PC-9 (cell line): ENCODE measurements at regions of chr14 and their contacts with region 1.

Region 1: GRCh38 chr14:54488646-54489317 is at the start of gene GMFB:
- DNase-seq: peak; percentile 85 to 94
- H3K4me3 ChIP-seq: peak within 1 kb of the TSS; percentile 80
- H3K27ac ChIP-seq: peak within 1 kb of the TSS; percentile 95
- H3K4me1 ChIP-seq: peaks cover 30% of the 10 kb centered on the region
- H3K27me3 ChIP-seq: no peaks in the 10 kb centered on the region
- CTCF ChIP-seq: no peak
- total RNA-seq, gene GMFB: 32.2 and 35.5 TPM in 2 replicates

Region 2: DNA sequence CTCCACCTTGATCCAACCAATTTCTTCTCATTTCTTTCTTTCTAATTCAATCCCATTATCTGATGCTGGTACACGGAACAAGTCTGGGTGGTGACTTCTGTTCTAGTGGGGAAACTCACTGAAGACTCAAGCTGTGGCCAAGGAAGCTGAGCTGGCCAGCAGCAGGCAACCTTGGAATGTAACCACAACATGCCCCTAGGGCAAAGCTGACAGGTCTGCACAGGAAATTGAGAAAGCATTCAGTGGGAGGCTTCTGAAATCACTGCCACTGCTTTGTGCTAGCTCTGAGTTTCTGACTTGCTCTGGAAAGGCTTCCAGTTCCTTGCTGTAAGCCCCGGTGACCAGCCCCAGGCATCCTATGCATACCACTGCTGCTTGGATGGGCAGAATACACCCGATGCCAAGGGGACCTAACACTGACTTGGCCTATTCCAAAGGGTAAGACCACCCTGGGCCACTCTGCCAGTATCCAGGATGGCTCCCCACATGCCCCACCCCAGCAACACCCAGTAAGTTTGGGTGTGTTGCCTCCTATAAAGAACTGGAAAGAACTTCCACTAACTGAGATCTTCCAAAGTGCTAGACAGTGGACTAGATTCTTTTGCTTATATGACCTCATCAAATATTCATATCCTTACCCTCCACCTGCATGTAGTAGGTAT is 176.5 kb before region 1 on chr14:
- CTCF ChIA-PET with region 1: no interaction called
- POLR2A ChIA-PET with region 1: no interaction called
- intact Hi-C with region 1: no loop called
- DNase-seq: peak; percentile 91 to 97
- H3K4me3 ChIP-seq: no peak overlapping the region; the same call in 1 of the 2 replicates
- H3K27ac ChIP-seq: peak overlapping the region; percentile 75
- H3K4me1 ChIP-seq: peaks cover 35% of the 10 kb centered on the region
- H3K27me3 ChIP-seq: no peaks in the 10 kb centered on the region
- CTCF ChIP-seq: no peak

Region 3: DNA sequence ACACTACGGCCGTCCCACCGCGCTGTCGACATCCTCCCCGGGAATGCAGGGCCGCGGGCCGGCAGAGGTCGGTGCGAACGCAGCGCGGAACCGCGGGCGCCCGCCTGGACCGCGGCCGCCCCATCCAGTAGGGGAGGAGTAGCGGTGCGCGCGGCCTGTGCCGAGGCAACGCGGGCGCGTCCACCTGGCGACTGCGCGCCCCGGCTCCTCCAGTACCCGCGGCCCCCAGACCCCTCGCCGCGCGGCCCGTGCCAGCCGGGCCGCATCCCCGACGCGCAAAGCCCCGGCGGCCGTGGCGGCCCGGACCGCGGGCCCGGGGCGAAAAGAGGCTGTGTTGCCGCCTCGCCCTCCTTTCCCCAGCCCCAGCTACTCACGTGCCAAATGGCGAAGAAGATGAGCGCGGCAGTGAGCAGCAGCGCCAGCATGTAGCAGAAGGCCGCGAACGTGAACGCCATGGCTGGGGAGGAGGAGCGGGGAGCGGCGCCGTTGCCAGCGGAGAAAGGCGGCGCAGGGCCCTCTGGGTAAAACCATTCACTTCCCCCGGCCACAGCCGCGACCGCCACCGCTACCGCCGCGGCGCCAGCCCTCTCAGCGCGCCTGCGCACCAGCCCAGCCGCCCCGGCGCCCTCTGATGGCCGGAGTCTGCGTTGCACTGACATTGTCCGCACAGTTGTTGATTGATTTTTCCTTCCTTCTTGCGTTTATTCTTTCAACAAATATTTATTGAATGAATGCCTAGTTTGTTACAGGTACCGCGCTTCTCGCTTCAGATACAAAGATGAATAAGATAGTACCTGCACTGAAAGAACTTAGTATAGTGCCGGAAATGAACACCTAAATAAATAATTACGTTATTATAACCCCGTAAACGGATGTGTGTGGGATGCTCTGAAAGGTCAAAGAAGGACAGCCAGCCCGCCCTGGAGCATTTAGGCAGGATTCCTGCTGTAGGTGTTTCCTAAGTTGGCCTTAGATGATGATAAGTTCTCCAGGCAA is 47.6 kb before region 1 on chr14 and contains the start of gene CNIH1:
- CTCF ChIA-PET with region 1: no interaction called
- POLR2A ChIA-PET with region 1: interaction called, 3 read pairs
- intact Hi-C with region 1: loop called (anchors 2 kb)
- DNase-seq: peak; percentile 74 to 93
- H3K4me3 ChIP-seq: peak within 1 kb of the TSS; percentile 72
- H3K27ac ChIP-seq: peak within 1 kb of the TSS; percentile 73
- H3K4me1 ChIP-seq: peaks cover 37% of the 10 kb centered on the region
- H3K27me3 ChIP-seq: no peaks in the 10 kb centered on the region
- CTCF ChIP-seq: peak; percentile 88
- total RNA-seq, gene CNIH1: 70.6 and 114 TPM in 2 replicates

Region 4: DNA sequence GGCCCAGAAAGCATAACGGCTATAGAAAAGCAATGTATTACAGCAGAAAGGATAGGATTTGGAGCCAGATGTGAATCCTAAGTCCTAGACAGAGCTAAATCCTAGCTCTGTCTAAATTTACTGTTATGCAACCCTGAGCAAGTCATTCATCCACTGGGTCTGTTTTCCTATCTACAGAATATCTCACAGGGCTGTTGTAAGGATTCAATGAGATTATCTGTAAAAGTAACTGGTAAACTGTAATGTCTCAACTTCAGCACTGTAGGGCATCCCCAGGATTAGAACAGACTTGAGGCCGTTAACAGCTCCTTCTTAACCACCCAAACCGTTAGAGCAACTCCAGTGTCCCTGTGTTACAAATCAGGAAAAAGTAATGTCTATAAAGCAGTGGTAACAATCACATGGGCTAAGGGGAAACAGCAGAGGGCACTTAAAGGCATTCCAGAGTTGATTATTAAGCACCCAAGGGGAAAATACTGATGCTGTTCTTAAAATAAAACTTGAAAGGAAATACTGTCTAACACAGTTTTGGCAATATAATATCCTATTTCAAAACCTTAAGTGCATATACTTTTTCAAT is 10.1 kb before region 1 on chr14:
- CTCF ChIA-PET with region 1: no interaction called
- POLR2A ChIA-PET with region 1: interaction called, 10 read pairs
- intact Hi-C with region 1: no loop called
- DNase-seq: no peak
- H3K4me3 ChIP-seq: no peak overlapping the region
- H3K27ac ChIP-seq: no peak overlapping the region
- H3K4me1 ChIP-seq: peaks cover 39% of the 10 kb centered on the region
- H3K27me3 ChIP-seq: no peaks in the 10 kb centered on the region
- CTCF ChIP-seq: no peak

Region 5: DNA sequence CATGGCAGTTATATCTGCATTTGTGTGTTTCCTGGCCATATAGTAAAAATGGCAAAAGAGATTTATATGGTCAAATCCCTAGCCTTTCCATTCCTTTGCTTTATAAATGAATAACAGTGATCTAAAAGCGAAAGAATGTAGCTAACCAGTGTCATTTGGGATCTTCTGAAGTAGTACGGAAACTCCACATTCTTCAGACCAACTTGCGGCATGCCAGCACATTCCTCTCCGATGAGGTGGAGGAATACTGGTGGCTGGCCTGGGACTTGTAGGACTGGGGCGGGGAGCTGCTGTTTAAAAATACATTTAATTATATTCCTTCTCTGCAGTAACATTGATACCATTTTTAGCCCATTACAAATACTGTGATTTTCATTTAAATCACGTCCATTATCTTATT is 163.4 kb after region 1 on chr14:
- CTCF ChIA-PET with region 1: no interaction called
- POLR2A ChIA-PET with region 1: no interaction called
- intact Hi-C with region 1: loop called (anchors 10 kb)
- DNase-seq: peak; percentile 84 to 98
- H3K4me3 ChIP-seq: peak overlapping the region; percentile 42; the same call in 1 of the 2 replicates
- H3K27ac ChIP-seq: peak overlapping the region; percentile 96
- H3K4me1 ChIP-seq: peaks cover 66% of the 10 kb centered on the region
- H3K27me3 ChIP-seq: no peaks in the 10 kb centered on the region
- CTCF ChIP-seq: no peak

Region 6: GRCh38 chr14:55339770-55340169 is 851.0 kb after region 1 on chr14:
- CTCF ChIA-PET with region 1: no interaction called
- POLR2A ChIA-PET with region 1: no interaction called
- intact Hi-C with region 1: no loop called
- DNase-seq: no peak
- H3K4me3 ChIP-seq: no peak overlapping the region
- H3K27ac ChIP-seq: no peak overlapping the region
- H3K4me1 ChIP-seq: peaks cover 25% of the 10 kb centered on the region
- H3K27me3 ChIP-seq: no peaks in the 10 kb centered on the region
- CTCF ChIP-seq: no peak